ENCODE measurements at regions of chr11 and their contacts with region 1.

Region 1: DNA sequence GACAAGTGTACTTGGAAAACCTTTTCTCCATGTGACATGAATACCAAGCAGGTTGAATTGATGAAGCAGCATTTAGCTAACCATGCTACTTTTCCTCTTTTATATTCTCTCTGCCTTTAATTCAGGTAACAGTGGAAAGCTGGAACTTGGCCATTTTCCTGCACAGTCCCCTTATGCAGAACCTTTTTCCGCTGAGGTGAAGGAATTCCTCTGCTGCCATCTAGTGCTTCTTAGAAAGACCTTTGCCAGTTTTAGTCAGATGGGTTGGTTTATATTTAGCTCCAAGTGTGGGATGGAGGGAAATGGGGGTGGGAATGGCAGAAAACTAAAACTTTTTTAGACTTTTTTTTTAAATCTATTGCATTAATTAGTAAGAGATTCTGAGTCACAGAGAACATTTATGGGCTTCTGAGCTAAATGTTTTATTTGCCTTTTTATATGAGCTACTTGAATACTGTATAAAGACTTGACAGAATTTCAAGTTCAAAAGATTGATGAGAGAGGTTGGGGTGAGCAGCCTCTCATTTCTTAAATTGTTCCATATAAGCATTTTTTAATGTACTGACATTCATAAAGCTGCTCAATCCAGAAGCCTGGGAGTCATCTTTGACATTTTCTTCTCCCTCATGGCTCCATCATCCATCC is 153.9 kb upstream of the ZC3H12C start:
- DNase-seq: peak; percentile 24
- CTCF ChIP-seq: peak; percentile 60

Region 2: GRCh38 chr11:109853156-109853776 is 86.0 kb before region 1 on chr11:
- CTCF ChIA-PET with region 1: interaction called, 101 read pairs
- POLR2A ChIA-PET with region 1: no interaction called
- DNase-seq: peak; percentile 27
- CTCF ChIP-seq: peak; percentile 82

Region 3: DNA sequence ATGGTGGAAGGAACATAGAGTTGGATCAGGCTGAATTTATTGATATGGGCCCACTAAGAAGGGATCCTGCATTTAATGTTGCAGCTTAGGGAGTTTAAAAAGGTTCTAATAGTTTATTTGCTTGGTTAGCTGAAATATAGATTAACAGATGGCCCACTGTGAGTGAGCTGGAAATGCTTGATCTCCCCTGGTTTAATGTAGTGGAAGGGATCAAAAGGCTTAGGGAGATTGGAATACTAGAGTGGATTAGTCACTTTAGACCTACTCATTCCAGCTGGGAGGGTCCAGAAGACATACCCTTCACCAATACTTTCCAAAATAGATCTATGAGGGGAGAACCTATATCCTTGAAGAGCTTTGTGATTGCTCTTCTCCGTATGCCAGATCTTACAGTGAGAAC is 23.8 kb after region 1 on chr11:
- CTCF ChIA-PET with region 1: no interaction called
- POLR2A ChIA-PET with region 1: no interaction called
- DNase-seq: no peak
- CTCF ChIP-seq: no peak